GM12878 (cell line): ENCODE measurements at regions of chr13 and their contacts with region 1.

Region 1: GRCh38 chr13:77016888-77017623 is 9.9 kb downstream of the FBXL3 start:
- DNase-seq: no peak
- ATAC-seq: peak; percentile 17; the same call in 1 of the 3 replicates
- H3K4me3 ChIP-seq: no peak overlapping the region
- H3K27ac ChIP-seq: no peak overlapping the region
- H3K4me1 ChIP-seq: peaks cover 3% of the 10 kb centered on the region; the same call in 1 of the 2 replicates
- H3K27me3 ChIP-seq: no peaks in the 10 kb centered on the region
- CTCF ChIP-seq: peak in 1 of 3 experiments; percentile 6; a peak in 1 of 6 replicates
- EP300 ChIP-seq: no peak
- POLR2A ChIP-seq: no peak
- RAD21 ChIP-seq: no peak

Region 2: DNA sequence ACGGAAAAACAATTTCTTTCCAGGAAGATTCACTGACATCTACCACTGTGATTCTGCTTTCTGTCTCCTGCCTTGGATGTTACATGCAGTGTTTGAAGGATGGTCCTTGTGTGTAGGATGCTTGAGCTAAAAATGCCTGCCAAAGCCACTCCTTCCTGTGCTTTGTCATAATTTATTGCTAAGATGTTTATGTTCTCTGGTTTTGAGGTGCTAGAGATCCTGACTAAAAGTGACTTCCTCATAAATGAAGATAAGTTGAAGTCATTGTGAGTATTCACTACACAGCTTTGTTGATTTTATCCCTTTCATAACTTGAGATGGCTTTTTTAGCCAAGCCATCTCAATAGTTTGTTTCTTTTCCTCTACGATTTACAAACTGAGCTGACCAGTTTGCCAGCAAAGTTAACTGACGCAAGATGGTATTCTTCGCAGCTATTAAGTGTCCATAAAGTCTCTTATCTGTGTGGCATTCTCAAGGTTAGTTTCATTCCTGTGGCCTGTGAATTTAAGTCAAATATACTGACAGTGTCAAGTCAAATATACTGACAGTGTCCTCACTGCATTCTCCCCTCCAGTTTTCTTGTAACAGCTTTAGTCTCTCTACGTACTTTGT is 25.6 kb after region 1 on chr13:
- CTCF ChIA-PET with region 1: interaction called, 12 read pairs
- POLR2A ChIA-PET with region 1: no interaction called
- RAD21 ChIA-PET with region 1: no interaction called
- SMC1A ChIA-PET with region 1: interaction called, 3 read pairs
- in situ Hi-C with region 1: no loop called
- intact Hi-C with region 1: no loop called
- DNase-seq: no peak
- ATAC-seq: no peak
- H3K4me3 ChIP-seq: no peak overlapping the region
- H3K27ac ChIP-seq: no peak overlapping the region
- H3K4me1 ChIP-seq: no peaks in the 10 kb centered on the region
- H3K27me3 ChIP-seq: no peaks in the 10 kb centered on the region
- CTCF ChIP-seq: no peak
- EP300 ChIP-seq: no peak
- POLR2A ChIP-seq: no peak
- RAD21 ChIP-seq: no peak